ENCODE measurements at regions of chr4 and their contacts with region 1.

Region 1: GRCh38 chr4:56387023-56388001 is at the start of gene AASDH:
- DNase-seq: peak; percentile 98
- ATAC-seq: peak; percentile 90
- H3K4me3 ChIP-seq: peak within 1 kb of the TSS; percentile 88
- H3K27ac ChIP-seq: peak within 1 kb of the TSS; percentile 86
- H3K4me1 ChIP-seq: peaks cover 21% of the 10 kb centered on the region
- H3K27me3 ChIP-seq: no peaks in the 10 kb centered on the region
- CTCF ChIP-seq: no peak
- total RNA-seq, gene AASDH: 7.5 and 8.8 TPM in 2 replicates

Region 2: DNA sequence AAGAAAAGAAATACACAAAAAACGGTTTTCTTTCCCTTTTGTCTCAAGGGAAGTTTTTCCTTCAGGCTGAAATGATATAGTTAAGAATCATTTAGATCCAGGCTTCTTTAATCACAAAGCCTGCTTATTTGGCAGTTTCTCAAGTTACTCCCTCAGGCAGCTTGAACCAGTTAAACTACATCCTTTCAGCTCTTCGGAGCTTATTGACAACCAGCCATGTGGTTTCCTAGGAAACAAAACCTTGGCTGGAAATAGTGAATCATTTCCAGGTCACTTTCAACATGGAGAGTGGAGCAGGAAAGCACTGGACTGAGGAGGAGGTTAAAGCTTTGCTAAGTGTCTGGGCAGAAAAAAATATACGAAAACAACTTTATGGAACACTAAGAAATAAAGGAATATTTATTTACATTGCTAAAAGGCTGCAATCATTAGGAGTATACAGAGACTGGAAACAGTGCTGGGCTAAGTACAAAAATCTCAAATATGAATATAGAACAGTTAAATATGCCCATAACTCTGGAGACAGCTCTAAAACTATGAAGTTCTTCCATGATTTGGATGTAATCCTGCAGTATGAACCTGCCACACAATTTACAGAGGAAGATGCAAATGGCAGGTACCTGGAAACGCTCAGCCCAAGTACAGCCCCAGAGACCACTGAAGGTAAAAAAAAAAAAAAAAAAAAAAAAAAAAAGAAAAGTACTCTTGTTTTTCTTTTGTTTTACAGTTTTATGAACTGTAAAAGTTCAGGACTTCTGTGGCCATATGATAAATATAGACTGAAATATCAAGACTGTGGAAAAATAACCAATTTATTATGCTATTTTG is 23.1 kb after region 1 on chr4:
- CTCF ChIA-PET with region 1: no interaction called
- POLR2A ChIA-PET with region 1: interaction called, 7 read pairs
- intact Hi-C with region 1: loop called (anchors 1 kb)
- DNase-seq: peak; percentile 100
- ATAC-seq: peak; percentile 88
- H3K4me3 ChIP-seq: peak overlapping the region; percentile 46
- H3K27ac ChIP-seq: peak overlapping the region; percentile 65
- H3K4me1 ChIP-seq: peaks cover 25% of the 10 kb centered on the region
- H3K27me3 ChIP-seq: no peaks in the 10 kb centered on the region
- CTCF ChIP-seq: no peak

Region 3: DNA sequence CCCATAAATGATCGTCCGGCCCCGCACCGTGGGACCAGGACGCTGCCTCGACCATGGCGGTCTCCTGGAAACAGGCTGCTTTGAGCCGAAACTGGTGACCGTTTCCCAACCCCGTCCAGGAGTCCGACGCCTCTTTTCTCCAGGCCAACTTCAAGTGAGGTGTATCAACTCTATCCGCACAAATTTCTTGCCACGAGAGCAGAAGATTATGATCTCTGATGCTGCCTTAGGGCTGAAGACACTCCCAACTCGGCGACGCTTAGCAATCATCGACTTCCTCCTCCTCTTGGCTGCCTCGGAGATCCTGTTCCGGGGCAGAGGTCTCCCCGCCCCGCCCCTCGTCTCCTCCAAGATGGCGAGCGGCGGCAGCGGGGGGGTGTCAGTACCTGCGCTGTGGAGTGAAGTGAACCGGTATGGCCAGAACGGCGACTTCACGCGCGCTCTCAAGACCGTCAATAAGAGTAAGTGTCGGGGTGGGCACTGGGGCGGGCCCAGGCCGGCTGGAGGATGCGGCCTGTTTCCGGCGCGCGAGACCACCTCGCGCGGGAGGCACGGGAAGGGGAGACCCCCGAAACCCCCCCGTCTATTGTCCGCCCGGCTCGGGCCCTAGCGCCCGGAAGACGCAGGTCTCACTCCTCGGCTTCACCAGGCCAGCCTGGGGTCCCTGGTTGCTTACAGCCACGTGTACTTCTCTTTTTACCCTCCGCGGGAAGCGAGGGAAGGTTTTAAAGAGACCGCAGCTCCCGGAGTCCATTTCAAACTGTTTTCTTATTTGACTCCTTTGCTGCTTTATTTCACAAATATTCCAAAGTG is 80.2 kb after region 1 on chr4 and contains the start of gene SRP72:
- CTCF ChIA-PET with region 1: no interaction called
- POLR2A ChIA-PET with region 1: interaction called, 3 read pairs
- intact Hi-C with region 1: loop called (anchors 1 kb)
- DNase-seq: peak; percentile 95
- ATAC-seq: peak; percentile 89
- H3K4me3 ChIP-seq: peak within 1 kb of the TSS; percentile 86
- H3K27ac ChIP-seq: peak within 1 kb of the TSS; percentile 75
- H3K4me1 ChIP-seq: peaks cover 26% of the 10 kb centered on the region
- H3K27me3 ChIP-seq: no peaks in the 10 kb centered on the region
- CTCF ChIP-seq: no peak
- total RNA-seq, gene SRP72: 102 and 118 TPM in 2 replicates

Measured in PC-3 (cell line).